Activated naive CD4-positive, alpha-beta T cell treated with anti-CD3 and anti-CD28 coated beads for 36 hours (primary cell): ENCODE measurements at regions of chr13 and their contacts with region 1.

Region 1: GRCh38 chr13:28636674-28637317 is 22.1 kb upstream of the POMP start:
- DNase-seq: peak; percentile 77
- H3K4me3 Mint-ChIP-seq: no peak overlapping the region
- H3K27ac Mint-ChIP-seq: peak overlapping the region; percentile 10
- H3K4me1 Mint-ChIP-seq: peaks cover 9% of the 10 kb centered on the region
- H3K27me3 Mint-ChIP-seq: peaks cover 17% of the 10 kb centered on the region

Region 2: DNA sequence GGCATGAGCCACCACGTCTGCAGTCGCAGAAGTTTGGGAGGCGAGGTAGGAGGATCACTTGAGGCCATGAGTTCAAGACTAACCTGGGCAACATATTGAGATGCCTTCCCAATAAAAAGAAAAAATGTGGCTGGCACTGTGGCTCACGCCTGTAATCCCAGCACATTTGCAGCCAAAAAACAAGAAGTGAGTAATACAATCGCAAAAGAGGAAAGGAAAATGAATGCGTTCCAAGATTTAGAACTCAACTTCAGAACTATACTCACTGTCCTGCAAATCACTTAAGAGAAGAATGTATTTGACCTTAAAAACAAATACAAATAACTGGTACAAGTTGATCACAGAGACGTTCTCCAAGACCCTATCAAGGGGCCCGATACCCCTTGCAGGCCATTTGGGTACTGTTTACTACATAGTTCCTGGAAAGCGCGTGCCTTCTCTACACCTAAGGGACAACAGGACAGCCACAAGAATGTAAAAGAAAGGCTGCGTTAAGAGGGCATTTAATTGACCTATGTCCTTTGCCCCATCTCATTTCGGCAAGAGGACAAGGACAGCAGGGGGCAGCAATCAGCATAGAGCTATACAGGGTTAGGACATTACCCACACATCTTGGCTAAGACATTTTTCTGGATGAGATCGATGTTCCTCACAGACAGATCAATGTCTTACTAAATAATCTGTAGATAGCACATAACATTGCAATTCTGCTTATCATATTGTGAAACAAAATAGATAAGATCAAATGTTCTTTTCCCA is 577.8 kb before region 1 on chr13:
- CTCF ChIA-PET with region 1: no interaction called
- intact Hi-C with region 1: loop called (anchors 1 kb)
- DNase-seq: peak; percentile 72
- H3K4me3 Mint-ChIP-seq: no peak overlapping the region
- H3K27ac Mint-ChIP-seq: no peak overlapping the region
- H3K4me1 Mint-ChIP-seq: no peaks in the 10 kb centered on the region
- H3K27me3 Mint-ChIP-seq: peaks cover 3% of the 10 kb centered on the region

Region 3: GRCh38 chr13:28185256-28185655 is 451.5 kb before region 1 on chr13:
- CTCF ChIA-PET with region 1: no interaction called
- intact Hi-C with region 1: no loop called
- DNase-seq: no peak
- H3K4me3 Mint-ChIP-seq: no peak overlapping the region
- H3K27ac Mint-ChIP-seq: no peak overlapping the region
- H3K4me1 Mint-ChIP-seq: peaks cover 29% of the 10 kb centered on the region
- H3K27me3 Mint-ChIP-seq: no peaks in the 10 kb centered on the region

Region 4: DNA sequence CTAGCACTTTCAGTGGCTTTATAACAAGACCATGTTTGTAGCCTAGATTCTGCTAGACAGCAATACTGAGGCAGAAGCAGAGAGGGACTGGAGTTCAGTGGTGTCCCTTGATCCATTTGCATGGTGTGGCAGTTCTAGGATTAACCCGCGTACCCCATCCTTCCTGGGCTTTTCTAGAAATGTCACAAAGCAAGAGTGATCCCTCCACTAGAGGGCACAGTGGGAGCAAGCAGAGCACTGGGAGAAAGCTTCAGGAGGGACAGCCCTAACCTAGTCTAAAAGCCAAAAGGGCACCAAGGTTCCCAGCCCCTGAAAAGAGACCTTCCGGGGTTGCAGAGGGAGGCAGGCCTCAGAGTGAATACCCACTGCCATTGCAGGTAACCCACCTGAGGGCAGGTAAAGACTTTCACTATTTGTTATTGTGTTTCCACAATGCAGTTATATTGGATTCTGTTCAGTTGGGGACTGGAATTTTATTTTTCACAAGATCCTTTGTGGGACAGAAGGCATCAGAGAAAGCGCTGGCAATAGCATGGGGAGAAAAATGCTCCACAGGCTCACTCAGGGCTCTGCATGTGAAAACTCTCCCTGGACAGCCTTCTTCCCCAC is 312.5 kb before region 1 on chr13:
- CTCF ChIA-PET with region 1: interaction called, 7 read pairs
- intact Hi-C with region 1: loop called (anchors 1 kb)
- DNase-seq: peak; percentile 79
- H3K4me3 Mint-ChIP-seq: no peak overlapping the region
- H3K27ac Mint-ChIP-seq: no peak overlapping the region
- H3K4me1 Mint-ChIP-seq: no peaks in the 10 kb centered on the region
- H3K27me3 Mint-ChIP-seq: no peaks in the 10 kb centered on the region

Region 5: DNA sequence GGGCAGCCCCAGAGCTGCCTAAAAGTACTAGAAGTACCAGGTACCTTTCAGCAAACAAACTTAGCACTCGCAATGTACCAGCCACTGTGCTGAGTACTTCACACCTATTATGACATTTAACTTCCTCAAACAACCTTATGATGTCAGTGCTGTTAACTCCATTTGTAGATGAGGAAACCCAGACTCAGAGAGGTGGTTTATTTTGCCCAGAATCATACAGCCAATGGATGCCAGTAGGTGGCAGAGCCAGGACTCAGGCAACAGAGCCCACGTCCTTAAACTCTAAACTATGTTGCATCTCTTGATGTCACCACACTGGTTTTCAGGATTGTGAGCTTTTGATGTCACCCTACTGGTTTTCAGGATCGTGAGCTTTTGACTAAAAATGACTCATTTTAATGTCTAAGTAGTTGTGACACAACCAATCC is 220.8 kb before region 1 on chr13:
- CTCF ChIA-PET with region 1: interaction called, 3 read pairs
- intact Hi-C with region 1: loop called (anchors 2 kb)
- DNase-seq: peak; percentile 27
- H3K4me3 Mint-ChIP-seq: no peak overlapping the region
- H3K27ac Mint-ChIP-seq: no peak overlapping the region
- H3K4me1 Mint-ChIP-seq: no peaks in the 10 kb centered on the region
- H3K27me3 Mint-ChIP-seq: peaks cover 2% of the 10 kb centered on the region

Region 6: DNA sequence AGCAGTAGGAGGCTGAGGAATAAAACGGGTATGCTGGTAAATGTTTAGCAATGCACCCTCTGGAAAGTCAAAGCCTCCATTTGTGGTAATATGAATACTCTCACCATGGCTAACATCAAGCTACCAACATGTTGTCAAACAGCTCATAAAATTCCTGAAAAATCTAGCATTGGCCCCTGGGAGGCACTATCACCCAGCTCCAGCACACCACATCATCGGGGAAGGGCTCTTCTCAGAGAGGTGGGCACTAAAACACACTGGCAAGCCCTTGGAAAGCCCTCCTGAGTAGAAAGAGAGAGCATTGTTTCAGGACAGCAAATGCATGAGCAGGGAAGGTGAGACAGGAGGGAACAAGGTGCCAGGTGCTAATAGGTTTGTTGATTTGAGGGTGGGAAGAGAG is 87.9 kb before region 1 on chr13:
- CTCF ChIA-PET with region 1: no interaction called
- intact Hi-C with region 1: no loop called
- DNase-seq: no peak
- H3K4me3 Mint-ChIP-seq: no peak overlapping the region
- H3K27ac Mint-ChIP-seq: no peak overlapping the region
- H3K4me1 Mint-ChIP-seq: peaks cover 2% of the 10 kb centered on the region
- H3K27me3 Mint-ChIP-seq: peaks cover 13% of the 10 kb centered on the region

Region 7: GRCh38 chr13:28564080-28564868 is 72.5 kb before region 1 on chr13:
- CTCF ChIA-PET with region 1: no interaction called
- intact Hi-C with region 1: no loop called
- DNase-seq: no peak
- H3K4me3 Mint-ChIP-seq: no peak overlapping the region
- H3K27ac Mint-ChIP-seq: no peak overlapping the region
- H3K4me1 Mint-ChIP-seq: no peaks in the 10 kb centered on the region
- H3K27me3 Mint-ChIP-seq: peaks cover 5% of the 10 kb centered on the region

Region 8: GRCh38 chr13:28574617-28575142 is 62.1 kb before region 1 on chr13:
- CTCF ChIA-PET with region 1: no interaction called
- intact Hi-C with region 1: loop called (anchors 2 kb)
- DNase-seq: peak; percentile 65
- H3K4me3 Mint-ChIP-seq: no peak overlapping the region
- H3K27ac Mint-ChIP-seq: peak overlapping the region; percentile 77
- H3K4me1 Mint-ChIP-seq: peaks cover 11% of the 10 kb centered on the region
- H3K27me3 Mint-ChIP-seq: no peaks in the 10 kb centered on the region

Region 9: GRCh38 chr13:28658796-28659620 is 22.2 kb after region 1 on chr13 and contains the start of gene POMP:
- CTCF ChIA-PET with region 1: interaction called, 3 read pairs
- intact Hi-C with region 1: loop called (anchors 1 kb)
- DNase-seq: peak; percentile 95
- H3K4me3 Mint-ChIP-seq: peak within 1 kb of the TSS; percentile 97
- H3K27ac Mint-ChIP-seq: peak within 1 kb of the TSS; percentile 98
- H3K4me1 Mint-ChIP-seq: peaks cover 56% of the 10 kb centered on the region
- H3K27me3 Mint-ChIP-seq: no peaks in the 10 kb centered on the region
- total RNA-seq, gene POMP: 106 to 108 TPM